Endothelial cell of umbilical vein (primary cell): ENCODE measurements at regions of chr19 and their contacts with region 1.

Region 1: DNA sequence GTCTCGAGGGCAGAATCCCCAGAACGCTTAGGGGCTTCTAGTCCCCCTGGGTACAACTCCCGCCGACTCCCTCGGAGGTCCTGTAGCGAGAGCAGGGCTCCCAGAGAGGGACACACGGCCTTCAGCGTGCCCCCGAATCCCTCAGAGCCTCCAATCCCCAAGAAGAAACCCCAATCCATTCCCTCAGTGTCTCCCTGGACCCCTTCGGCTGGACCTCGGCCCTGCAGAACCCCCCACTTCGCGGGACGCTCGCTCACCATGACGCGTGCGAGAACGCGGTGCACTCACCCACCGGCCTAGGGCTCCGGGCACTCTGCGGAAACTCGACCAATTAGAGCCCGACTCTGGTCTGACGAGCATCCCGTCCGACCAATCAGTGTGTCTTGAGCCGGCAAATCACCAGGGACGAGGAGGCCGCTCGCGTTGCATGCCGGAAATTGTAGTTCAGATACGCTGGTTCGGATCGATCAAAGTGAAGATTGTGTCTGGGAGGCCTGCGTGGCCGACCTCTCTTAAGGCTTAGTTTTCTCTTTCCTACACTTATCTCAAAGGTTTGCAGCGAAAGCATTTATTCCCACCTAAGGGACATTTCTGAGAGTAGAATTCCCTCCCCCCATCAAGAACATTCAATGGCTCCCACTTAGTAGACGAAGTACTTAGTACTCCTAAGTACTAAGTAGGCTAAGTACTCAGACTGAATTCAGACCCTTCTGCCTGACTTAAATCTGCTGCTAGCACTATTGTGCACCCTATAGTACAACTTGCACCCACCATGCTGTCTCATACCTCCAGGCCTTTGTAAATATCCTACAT is at the start of gene TMEM161A:
- DNase-seq: peak; percentile 99
- H3K4me3 ChIP-seq: peak within 1 kb of the TSS; percentile 50 to 72 (median 70)
- H3K27ac ChIP-seq: peak within 1 kb of the TSS; percentile 45
- H3K4me1 ChIP-seq: peaks cover 8% of the 10 kb centered on the region
- H3K27me3 ChIP-seq: no peaks in the 10 kb centered on the region
- CTCF ChIP-seq: no peak
- POLR2A ChIP-seq: peak; percentile 76
- total RNA-seq, gene TMEM161A: 23.3 and 24.1 TPM in 2 replicates

Region 2: GRCh38 chr19:19053508-19054314 is 84.7 kb before region 1 on chr19:
- CTCF ChIA-PET with region 1: interaction called, 14 read pairs
- POLR2A ChIA-PET with region 1: no interaction called
- dilution Hi-C with region 1: no loop called
- intact Hi-C with region 1: loop called (anchors 1 kb)
- DNase-seq: peak; percentile 53
- H3K4me3 ChIP-seq: no peak overlapping the region
- H3K27ac ChIP-seq: no peak overlapping the region
- H3K4me1 ChIP-seq: no peaks in the 10 kb centered on the region
- H3K27me3 ChIP-seq: no peaks in the 10 kb centered on the region
- CTCF ChIP-seq: peak; percentile 74 to 85
- POLR2A ChIP-seq: no peak

Region 3: DNA sequence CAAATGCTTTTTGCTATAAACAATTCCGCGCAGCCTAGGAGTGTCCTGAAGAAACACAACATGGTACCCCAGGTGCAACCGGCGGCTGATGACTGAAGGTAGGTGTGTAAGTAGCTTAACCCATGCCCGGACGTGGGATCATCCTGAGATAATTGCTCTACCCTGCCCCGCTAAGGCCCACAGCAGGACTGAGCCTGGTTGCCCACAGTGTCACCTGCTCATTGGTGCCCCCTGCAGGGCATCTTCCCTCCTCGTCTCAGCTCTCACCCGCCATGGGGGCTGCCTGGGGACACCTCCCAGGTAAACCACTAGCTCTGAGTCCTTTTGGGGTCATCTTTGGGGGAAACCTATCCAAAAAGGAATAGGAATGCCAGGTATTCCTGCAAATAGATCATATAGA is 22.4 kb before region 1 on chr19:
- CTCF ChIA-PET with region 1: interaction called, 11 read pairs
- POLR2A ChIA-PET with region 1: interaction called, 4 read pairs
- dilution Hi-C with region 1: no loop called
- intact Hi-C with region 1: loop called (anchors 1 kb)
- DNase-seq: no peak
- H3K4me3 ChIP-seq: no peak overlapping the region
- H3K27ac ChIP-seq: no peak overlapping the region
- H3K4me1 ChIP-seq: no peaks in the 10 kb centered on the region
- H3K27me3 ChIP-seq: no peaks in the 10 kb centered on the region
- CTCF ChIP-seq: peak; percentile 52 to 76
- POLR2A ChIP-seq: no peak